AG04450 (cell line): ENCODE measurements at regions of chr10 and their contacts with region 1.

Region 1: GRCh38 chr10:112663234-112664125 is 216.5 kb downstream of the VTI1A start:
- DNase-seq: no peak
- H3K4me3 ChIP-seq: no peak overlapping the region
- H3K27ac ChIP-seq: no peak overlapping the region
- H3K27me3 ChIP-seq: no peaks in the 10 kb centered on the region
- CTCF ChIP-seq: no peak

Region 2: GRCh38 chr10:112687647-112688046 is 24.2 kb after region 1 on chr10:
- CTCF ChIA-PET with region 1: interaction called, 10 read pairs
- POLR2A ChIA-PET with region 1: no interaction called
- DNase-seq: no peak
- H3K4me3 ChIP-seq: no peak overlapping the region
- H3K27ac ChIP-seq: no peak overlapping the region
- H3K27me3 ChIP-seq: no peaks in the 10 kb centered on the region
- CTCF ChIP-seq: no peak

Region 3: DNA sequence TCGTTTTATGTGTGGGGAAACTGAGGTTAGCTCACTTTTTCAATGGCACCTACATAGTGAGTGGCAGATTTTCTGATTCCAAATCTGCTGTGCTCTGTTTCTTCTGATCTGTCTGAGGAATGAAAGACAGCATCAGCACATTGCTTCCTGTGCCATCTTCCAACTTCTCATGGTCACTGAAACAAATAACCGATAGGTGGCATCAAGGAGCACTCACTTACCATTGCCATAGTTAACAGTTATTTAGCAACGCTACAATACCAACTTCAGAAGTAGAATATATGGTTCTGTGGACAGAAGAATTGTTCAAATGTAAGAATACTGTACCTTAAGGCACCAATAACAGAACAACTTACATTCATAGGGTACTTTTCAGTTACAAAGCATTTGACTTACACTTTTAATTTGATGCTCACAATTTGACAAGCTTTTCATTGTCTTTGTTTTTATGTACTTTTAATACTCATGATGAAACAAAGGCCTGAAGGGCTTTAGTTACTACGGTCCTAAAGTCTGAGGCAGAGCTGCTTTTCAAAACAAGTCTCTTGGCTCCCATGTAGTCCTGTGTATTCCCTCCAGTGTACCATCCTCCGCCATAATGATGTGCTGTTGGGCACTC is 57.7 kb after region 1 on chr10:
- CTCF ChIA-PET with region 1: no interaction called
- POLR2A ChIA-PET with region 1: no interaction called
- DNase-seq: no peak
- H3K4me3 ChIP-seq: no peak overlapping the region
- H3K27ac ChIP-seq: no peak overlapping the region
- H3K27me3 ChIP-seq: no peaks in the 10 kb centered on the region
- CTCF ChIP-seq: peak; percentile 73